ENCODE measurements at regions of chr14 and their contacts with region 1.

Region 1: DNA sequence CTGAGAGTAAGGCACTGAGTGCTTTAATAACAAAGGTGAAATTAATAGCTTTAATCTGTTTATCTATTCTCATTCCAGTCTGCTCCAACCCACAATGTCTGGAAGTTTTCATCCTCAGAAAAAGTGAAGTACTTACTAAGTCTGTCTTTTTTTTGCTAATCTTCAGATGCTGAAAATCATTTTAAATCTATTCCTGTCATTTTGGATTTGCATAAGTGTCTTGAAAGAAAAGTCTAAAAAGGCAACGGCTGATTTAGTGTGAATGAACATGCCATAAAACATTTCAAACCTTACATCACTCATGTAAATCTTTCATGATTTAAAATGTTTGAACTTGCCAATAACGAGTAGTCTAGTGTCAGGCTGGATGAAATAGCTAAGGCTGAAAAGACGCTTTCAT is 685.6 kb downstream of the RPS29 start:
- DNase-seq: no peak
- H3K4me3 ChIP-seq: no peak overlapping the region
- H3K27ac ChIP-seq: no peak overlapping the region
- H3K4me1 ChIP-seq: no peaks in the 10 kb centered on the region
- H3K27me3 ChIP-seq: no peaks in the 10 kb centered on the region
- CTCF ChIP-seq: no peak
- EP300 ChIP-seq: no peak
- POLR2A ChIP-seq: no peak

Region 2: DNA sequence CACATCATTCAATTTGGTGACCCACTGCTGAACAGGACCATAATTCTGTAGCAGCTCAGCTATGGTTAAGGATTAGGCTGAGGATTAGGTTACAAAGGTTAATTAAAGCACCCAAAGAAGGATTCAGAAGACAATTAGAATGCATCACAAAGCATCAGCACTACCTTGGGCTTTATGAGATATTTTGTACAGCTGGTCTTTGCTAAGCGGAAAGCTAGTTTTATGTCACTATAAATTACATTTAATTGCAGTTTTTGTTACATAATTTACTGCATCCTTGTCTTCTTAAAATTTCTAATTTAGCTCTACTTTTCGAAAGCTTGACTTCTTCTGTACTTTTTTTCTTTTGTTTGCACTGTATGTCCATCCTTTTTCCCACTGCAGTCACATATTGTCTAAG is 25.9 kb before region 1 on chr14:
- in situ Hi-C with region 1: no loop called
- intact Hi-C with region 1: loop called (anchors 1 kb)
- DNase-seq: no peak
- H3K4me3 ChIP-seq: no peak overlapping the region
- H3K27ac ChIP-seq: no peak overlapping the region
- H3K4me1 ChIP-seq: no peaks in the 10 kb centered on the region
- H3K27me3 ChIP-seq: no peaks in the 10 kb centered on the region
- CTCF ChIP-seq: no peak
- EP300 ChIP-seq: no peak
- POLR2A ChIP-seq: no peak

Measured in transverse colon (tissue), 4 donors.